ENCODE measurements at regions of chr4 and their contacts with region 1.

Region 1: DNA sequence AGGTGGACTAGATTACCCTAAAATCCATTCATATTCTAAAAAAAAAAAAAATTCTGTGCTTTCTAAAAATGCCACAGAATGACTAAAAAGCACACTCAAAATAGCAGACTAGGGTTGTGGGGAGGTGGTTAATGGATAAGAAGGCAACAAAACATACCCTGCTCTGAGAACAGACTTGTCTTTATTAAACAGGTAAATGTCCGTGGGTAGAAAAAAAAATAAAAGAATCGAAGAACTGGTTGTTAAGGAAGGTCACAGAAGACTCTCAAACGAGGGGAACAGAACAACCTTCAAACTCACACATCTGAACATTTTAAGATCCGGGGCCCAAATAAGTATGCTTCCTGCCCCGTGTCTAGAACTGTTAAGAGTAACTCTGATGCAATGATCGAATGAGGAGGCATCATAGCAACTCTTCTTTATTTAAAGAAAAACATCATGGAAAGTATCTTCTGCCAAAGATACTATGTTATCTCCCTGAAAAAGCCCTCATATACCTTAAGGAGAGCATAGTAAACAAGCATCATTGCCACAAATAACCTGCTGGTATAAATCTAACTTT is 68.4 kb downstream of the ELF2 start:
- DNase-seq: no peak
- ATAC-seq: no peak
- H3K4me3 ChIP-seq: no peak overlapping the region
- H3K27ac ChIP-seq: no peak overlapping the region
- H3K4me1 ChIP-seq: no peaks in the 10 kb centered on the region
- H3K27me3 ChIP-seq: no peaks in the 10 kb centered on the region
- CTCF ChIP-seq: no peak
- POLR2A ChIP-seq: no peak
- RAD21 ChIP-seq: no peak

Region 2: DNA sequence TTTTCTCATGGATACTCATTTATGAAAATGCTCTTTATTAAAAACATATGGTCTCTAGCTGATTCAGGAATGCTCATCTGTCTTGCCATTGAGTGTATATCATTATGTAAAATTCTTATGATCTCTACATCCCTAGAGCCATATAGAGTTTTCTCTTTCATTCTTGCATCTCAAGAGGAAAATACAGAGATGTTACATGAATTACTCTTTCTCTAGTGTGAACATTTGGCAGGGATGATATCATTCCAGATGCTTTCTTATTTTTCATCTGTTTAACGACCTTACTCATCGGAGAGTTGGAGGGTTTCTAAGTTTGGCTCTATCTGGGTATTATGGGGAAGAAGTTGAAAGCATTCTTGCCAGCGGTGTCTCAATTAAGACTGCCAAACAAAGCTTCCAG is 663.5 kb before region 1 on chr4:
- CTCF ChIA-PET with region 1: no interaction called
- POLR2A ChIA-PET with region 1: no interaction called
- dilution Hi-C with region 1: no loop called
- in situ Hi-C with region 1: no loop called
- intact Hi-C with region 1: no loop called
- DNase-seq: peak; percentile 12
- ATAC-seq: no peak
- H3K4me3 ChIP-seq: no peak overlapping the region
- H3K27ac ChIP-seq: no peak overlapping the region
- H3K4me1 ChIP-seq: no peaks in the 10 kb centered on the region
- H3K27me3 ChIP-seq: no peaks in the 10 kb centered on the region
- CTCF ChIP-seq: no peak
- POLR2A ChIP-seq: no peak
- RAD21 ChIP-seq: no peak

Region 3: GRCh38 chr4:139144911-139145551 is 36.4 kb after region 1 on chr4:
- CTCF ChIA-PET with region 1: no interaction called
- POLR2A ChIA-PET with region 1: no interaction called
- dilution Hi-C with region 1: no loop called
- in situ Hi-C with region 1: no loop called
- intact Hi-C with region 1: loop called (anchors 5 kb)
- DNase-seq: no peak
- ATAC-seq: peak; percentile 16; the same call in 1 of the 2 replicates
- H3K4me3 ChIP-seq: no peak overlapping the region
- H3K27ac ChIP-seq: no peak overlapping the region
- H3K4me1 ChIP-seq: peaks cover 11% of the 10 kb centered on the region
- H3K27me3 ChIP-seq: no peaks in the 10 kb centered on the region
- CTCF ChIP-seq: no peak
- POLR2A ChIP-seq: no peak
- RAD21 ChIP-seq: no peak